MCF 10A (cell line): ENCODE measurements at regions of chr3 and their contacts with region 1.

Region 1: GRCh38 chr3:143135150-143135549 is 15.6 kb downstream of the CHST2 start:
- DNase-seq: peak; percentile 95
- H3K4me3 Mint-ChIP-seq: no peak overlapping the region
- H3K27ac Mint-ChIP-seq: no peak overlapping the region
- H3K4me1 Mint-ChIP-seq: peaks cover 13% of the 10 kb centered on the region
- H3K27me3 Mint-ChIP-seq: no peaks in the 10 kb centered on the region
- CTCF ChIP-seq: no peak

Region 2: GRCh38 chr3:143329567-143330211 is 194.5 kb after region 1 on chr3:
- CTCF ChIA-PET with region 1: no interaction called
- POLR2A ChIA-PET with region 1: no interaction called
- intact Hi-C with region 1: loop called (anchors 2 kb)
- DNase-seq: no peak
- H3K4me3 Mint-ChIP-seq: no peak overlapping the region
- H3K27ac Mint-ChIP-seq: no peak overlapping the region
- H3K4me1 Mint-ChIP-seq: peaks cover 6% of the 10 kb centered on the region
- H3K27me3 Mint-ChIP-seq: no peaks in the 10 kb centered on the region
- CTCF ChIP-seq: no peak

Region 3: GRCh38 chr3:143433787-143434378 is 298.7 kb after region 1 on chr3:
- CTCF ChIA-PET with region 1: interaction called, 3 read pairs
- POLR2A ChIA-PET with region 1: no interaction called
- intact Hi-C with region 1: loop called (anchors 10 kb)
- DNase-seq: peak; percentile 36
- H3K4me3 Mint-ChIP-seq: no peak overlapping the region
- H3K27ac Mint-ChIP-seq: no peak overlapping the region
- H3K4me1 Mint-ChIP-seq: peaks cover 11% of the 10 kb centered on the region
- H3K27me3 Mint-ChIP-seq: no peaks in the 10 kb centered on the region
- CTCF ChIP-seq: peak; percentile 30